ENCODE measurements at regions of chr15 and their contacts with region 1.

Region 1: DNA sequence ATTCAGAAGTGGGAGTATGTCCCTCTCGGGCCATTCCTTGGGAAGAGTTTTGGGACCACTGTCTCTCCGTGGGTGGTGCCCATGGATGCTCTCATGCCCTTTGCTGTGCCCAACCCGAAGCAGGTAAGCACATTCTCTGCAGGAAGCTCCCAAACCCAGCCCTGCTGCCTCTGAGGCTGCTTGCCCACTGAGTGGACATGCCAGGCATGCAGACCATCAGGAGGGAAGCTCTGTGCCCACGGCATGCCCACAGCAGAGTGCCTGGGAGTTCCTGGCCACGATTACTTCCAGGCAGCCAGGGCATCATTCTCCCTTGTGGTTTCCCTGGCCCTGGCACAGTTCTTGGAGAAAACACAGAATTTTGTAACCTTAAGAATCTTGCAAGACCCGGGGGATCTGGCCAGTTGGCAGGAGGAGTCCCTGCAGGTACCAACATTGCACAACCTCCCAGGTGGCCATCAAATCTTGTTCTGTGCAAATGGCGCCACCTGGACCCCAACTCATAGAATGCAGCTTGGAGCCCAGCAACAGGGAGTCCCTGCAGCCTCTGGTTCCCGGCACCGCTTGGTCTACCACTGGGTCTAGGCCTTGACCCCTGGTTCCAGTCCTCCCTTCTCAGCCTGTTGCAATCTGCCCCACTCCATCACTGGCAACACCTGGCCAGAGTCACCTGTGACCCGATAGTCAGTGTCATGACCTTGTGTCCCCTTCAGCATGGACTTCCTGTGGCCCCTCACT is 20.4 kb downstream of the FAH start:
- DNase-seq: peak; percentile 81
- ATAC-seq: peak; percentile 81
- H3K4me3 Mint-ChIP-seq: no peak overlapping the region
- H3K27ac Mint-ChIP-seq: no peak overlapping the region
- H3K4me1 Mint-ChIP-seq: no peaks in the 10 kb centered on the region
- H3K27me3 Mint-ChIP-seq: no peaks in the 10 kb centered on the region

Region 2: DNA sequence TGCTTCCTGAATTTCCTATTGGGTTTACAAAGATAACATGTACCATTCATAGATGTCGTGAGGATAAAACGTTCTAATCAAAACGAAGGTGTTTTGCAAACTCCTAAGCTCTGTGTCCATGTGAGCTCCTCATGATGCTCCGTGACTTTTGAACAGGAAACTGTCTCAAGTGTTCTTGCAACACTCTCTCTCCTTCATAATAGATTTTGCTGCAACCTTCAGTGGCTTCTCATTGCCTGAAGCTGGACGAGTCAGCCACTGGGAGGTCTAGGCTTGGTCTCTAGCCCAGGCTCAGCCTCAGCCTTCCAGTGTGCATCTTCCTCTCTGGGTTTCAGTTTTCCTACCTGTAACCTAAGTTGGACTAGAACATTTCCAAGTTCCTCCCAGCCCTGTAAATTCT is 183.5 kb before region 1 on chr15:
- CTCF ChIA-PET with region 1: interaction called, 12 read pairs
- POLR2A ChIA-PET with region 1: no interaction called
- DNase-seq: no peak
- ATAC-seq: no peak
- H3K4me3 Mint-ChIP-seq: no peak overlapping the region
- H3K27ac Mint-ChIP-seq: no peak overlapping the region
- H3K4me1 Mint-ChIP-seq: peaks cover 3% of the 10 kb centered on the region
- H3K27me3 Mint-ChIP-seq: peaks cover 9% of the 10 kb centered on the region

Region 3: DNA sequence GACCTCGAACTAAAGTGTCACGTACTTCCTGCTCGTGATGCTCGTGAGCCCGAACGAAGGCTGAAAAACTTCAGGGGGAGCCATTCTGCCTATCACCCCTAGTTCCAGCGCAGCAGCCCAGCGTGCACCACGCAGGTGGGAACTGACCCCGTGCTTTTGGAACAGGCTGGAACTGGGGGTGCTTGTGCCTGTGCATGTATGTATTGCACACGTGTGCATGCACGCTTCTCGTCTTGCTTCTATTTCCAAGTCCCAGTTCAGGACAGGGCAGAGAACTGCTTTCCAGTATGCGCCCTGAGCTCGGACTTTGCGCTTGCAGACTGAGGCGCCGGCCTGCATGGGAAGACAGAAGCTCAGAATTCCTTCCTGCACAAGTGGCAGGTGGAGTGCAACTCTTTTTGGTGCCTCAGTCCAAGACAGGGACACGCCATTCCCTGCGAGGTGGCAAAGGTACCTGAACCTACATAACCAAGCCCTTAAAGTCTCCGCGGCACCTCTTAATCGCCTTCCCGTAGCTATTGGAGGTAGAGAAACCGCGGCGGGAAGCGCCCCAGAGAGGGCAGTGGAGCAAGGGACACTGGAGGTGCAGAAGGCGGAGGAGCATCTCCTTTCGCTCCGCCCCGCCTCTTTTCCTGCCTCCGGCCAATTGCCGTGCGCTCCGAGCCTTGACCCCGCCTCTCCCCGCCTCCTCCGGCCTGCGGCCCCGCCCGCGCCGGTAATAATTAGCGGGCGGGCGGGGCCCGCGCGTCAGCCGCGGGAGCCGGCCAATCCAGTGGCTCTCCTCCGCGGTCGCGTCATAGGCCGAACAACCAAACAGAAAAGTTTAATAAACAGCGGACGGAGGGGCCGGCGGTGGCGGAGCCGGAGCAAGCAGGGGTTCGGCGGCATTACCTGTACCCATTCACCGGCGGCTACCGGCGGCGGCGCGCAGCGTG is 114.1 kb before region 1 on chr15 and contains the start of gene ZFAND6:
- CTCF ChIA-PET with region 1: interaction called, 22 read pairs
- POLR2A ChIA-PET with region 1: no interaction called
- DNase-seq: peak; percentile 96
- ATAC-seq: peak; percentile 87
- H3K4me3 Mint-ChIP-seq: peak within 1 kb of the TSS; percentile 84
- H3K27ac Mint-ChIP-seq: peak within 1 kb of the TSS; percentile 96
- H3K4me1 Mint-ChIP-seq: peaks cover 42% of the 10 kb centered on the region
- H3K27me3 Mint-ChIP-seq: peaks cover 3% of the 10 kb centered on the region
- total RNA-seq, gene ZFAND6: 49.9 to 53.1 TPM

Region 4: GRCh38 chr15:80162059-80162554 is 11.1 kb before region 1 on chr15:
- CTCF ChIA-PET with region 1: interaction called, 10 read pairs
- POLR2A ChIA-PET with region 1: no interaction called
- DNase-seq: no peak
- ATAC-seq: no peak
- H3K4me3 Mint-ChIP-seq: no peak overlapping the region
- H3K27ac Mint-ChIP-seq: peak overlapping the region; percentile 92
- H3K4me1 Mint-ChIP-seq: peaks cover 28% of the 10 kb centered on the region
- H3K27me3 Mint-ChIP-seq: no peaks in the 10 kb centered on the region

Region 5: GRCh38 chr15:80202641-80203360 is 29.6 kb after region 1 on chr15:
- CTCF ChIA-PET with region 1: no interaction called
- POLR2A ChIA-PET with region 1: no interaction called
- DNase-seq: peak; percentile 9
- ATAC-seq: no peak
- H3K4me3 Mint-ChIP-seq: no peak overlapping the region
- H3K27ac Mint-ChIP-seq: no peak overlapping the region
- H3K4me1 Mint-ChIP-seq: no peaks in the 10 kb centered on the region
- H3K27me3 Mint-ChIP-seq: peaks cover 30% of the 10 kb centered on the region